ENCODE measurements at regions of chr12 and their contacts with region 1.

Region 1: DNA sequence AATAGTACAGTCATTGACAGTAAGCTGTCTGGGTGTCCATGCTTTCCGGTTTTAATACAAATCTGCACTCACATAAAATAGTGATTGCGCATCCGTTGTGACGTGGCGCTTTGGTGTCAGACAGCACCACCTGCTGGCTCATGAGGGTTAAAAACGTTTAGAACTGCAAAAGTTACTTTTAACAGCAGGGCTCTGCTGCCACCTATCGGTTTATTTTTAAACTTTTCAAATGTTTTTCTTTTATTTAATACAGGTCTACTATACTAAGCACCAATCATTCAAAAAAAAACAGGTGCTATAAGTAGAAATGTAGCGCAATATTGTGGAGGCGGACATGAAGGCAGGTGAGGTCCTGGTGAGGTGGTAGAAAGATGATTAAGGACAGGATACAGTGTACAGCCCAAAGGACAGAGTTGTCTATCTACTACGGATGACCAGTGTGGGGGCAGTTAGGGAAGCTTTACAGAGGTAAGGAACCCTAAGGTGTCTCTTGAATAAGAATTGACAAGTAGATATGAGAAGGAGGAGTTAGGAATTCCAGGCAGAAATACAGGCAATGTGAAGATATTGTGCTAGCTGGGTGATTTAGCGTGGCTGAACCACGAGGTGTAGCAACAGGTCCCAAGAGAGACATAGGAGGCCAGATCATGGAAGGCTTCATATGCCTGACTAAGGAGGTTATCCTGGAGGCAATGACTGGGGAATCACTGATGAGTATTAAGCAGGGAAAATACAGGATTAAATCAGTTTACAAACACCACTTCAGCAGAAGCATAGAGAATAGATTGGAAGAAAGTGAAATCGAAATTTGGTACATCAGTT is 91.5 kb upstream of the PRB2 start:
- DNase-seq: peak; percentile 43
- ATAC-seq: peak; percentile 94
- H3K4me3 ChIP-seq: no peak overlapping the region
- H3K27ac ChIP-seq: no peak overlapping the region
- H3K4me1 ChIP-seq: no peaks in the 10 kb centered on the region
- H3K27me3 ChIP-seq: no peaks in the 10 kb centered on the region
- CTCF ChIP-seq: peak; percentile 88 to 99 (median 98); a peak in 5 of 6 replicates
- EP300 ChIP-seq: no peak
- POLR2A ChIP-seq: no peak
- RAD21 ChIP-seq: peak; percentile 96

Region 2: DNA sequence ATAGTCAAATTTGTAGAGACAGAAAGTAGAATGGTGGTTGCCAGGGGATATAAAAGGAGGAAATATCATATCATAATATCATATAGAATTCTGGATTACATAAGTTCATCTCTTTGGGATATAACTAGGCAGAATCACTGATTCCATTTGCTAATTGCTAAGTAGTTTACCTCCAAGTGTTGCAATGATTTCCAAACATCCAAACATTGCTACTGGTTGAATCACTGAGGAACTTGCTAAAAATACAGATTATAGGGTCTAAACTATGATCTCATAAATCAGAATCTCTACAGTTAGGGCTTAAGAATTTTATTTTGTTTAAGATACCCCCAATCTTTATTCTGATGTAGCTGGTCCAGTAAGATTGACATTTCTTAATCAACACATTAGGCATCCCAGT is 284.0 kb before region 1 on chr12:
- CTCF ChIA-PET with region 1: interaction called, 5 read pairs
- POLR2A ChIA-PET with region 1: interaction called, 4 read pairs
- RAD21 ChIA-PET with region 1: interaction called, 5 read pairs
- SMC1A ChIA-PET with region 1: no interaction called
- in situ Hi-C with region 1: no loop called
- intact Hi-C with region 1: loop called (anchors 1 kb)
- DNase-seq: no peak
- ATAC-seq: no peak
- H3K4me3 ChIP-seq: no peak overlapping the region
- H3K27ac ChIP-seq: no peak overlapping the region
- H3K4me1 ChIP-seq: no peaks in the 10 kb centered on the region
- H3K27me3 ChIP-seq: no peaks in the 10 kb centered on the region; a peak in 1 of 4 replicates
- CTCF ChIP-seq: no peak
- EP300 ChIP-seq: no peak
- POLR2A ChIP-seq: no peak
- RAD21 ChIP-seq: no peak

Region 3: DNA sequence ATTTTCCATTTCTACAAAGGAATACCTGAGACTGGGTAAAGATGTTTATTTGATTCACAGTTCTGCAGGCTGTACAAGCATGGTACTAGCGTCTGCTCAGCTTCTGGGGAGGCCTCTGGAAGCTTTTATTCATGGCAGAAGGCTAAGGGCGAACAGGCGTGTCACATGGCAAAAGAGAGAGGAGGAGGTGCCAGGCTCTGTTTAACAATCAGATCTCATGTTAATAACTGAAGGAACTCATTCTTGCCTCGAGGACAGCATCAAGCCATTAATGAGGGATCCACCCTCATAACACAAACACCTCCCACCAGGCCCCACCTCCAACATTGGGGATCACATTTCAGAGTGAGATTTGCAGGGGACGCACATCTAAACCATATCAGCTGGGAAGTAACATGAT is 253.3 kb before region 1 on chr12:
- CTCF ChIA-PET with region 1: interaction called, 133 read pairs
- POLR2A ChIA-PET with region 1: no interaction called
- RAD21 ChIA-PET with region 1: interaction called, 45 read pairs
- SMC1A ChIA-PET with region 1: interaction called, 42 read pairs
- in situ Hi-C with region 1: loop called (anchors 5 kb)
- intact Hi-C with region 1: loop called (anchors 1 kb)
- DNase-seq: no peak
- ATAC-seq: no peak
- H3K4me3 ChIP-seq: no peak overlapping the region
- H3K27ac ChIP-seq: no peak overlapping the region
- H3K4me1 ChIP-seq: no peaks in the 10 kb centered on the region
- H3K27me3 ChIP-seq: no peaks in the 10 kb centered on the region
- CTCF ChIP-seq: no peak
- EP300 ChIP-seq: no peak
- POLR2A ChIP-seq: no peak
- RAD21 ChIP-seq: no peak

Region 4: GRCh38 chr12:11397366-11397765 is 89.5 kb before region 1 on chr12:
- CTCF ChIA-PET with region 1: no interaction called
- POLR2A ChIA-PET with region 1: no interaction called
- RAD21 ChIA-PET with region 1: no interaction called
- SMC1A ChIA-PET with region 1: no interaction called
- in situ Hi-C with region 1: no loop called
- intact Hi-C with region 1: no loop called
- DNase-seq: no peak
- ATAC-seq: no peak
- H3K4me3 ChIP-seq: no peak overlapping the region
- H3K27ac ChIP-seq: no peak overlapping the region
- H3K4me1 ChIP-seq: no peaks in the 10 kb centered on the region
- H3K27me3 ChIP-seq: peaks cover 0 to 2% of the 10 kb centered on the region in 2 experiments; a peak in 2 of 4 replicates
- CTCF ChIP-seq: no peak
- EP300 ChIP-seq: no peak
- POLR2A ChIP-seq: no peak
- RAD21 ChIP-seq: no peak

Region 5: GRCh38 chr12:11513288-11513687 is 26.5 kb after region 1 on chr12:
- CTCF ChIA-PET with region 1: interaction called, 19 read pairs
- POLR2A ChIA-PET with region 1: no interaction called
- RAD21 ChIA-PET with region 1: no interaction called
- SMC1A ChIA-PET with region 1: no interaction called
- in situ Hi-C with region 1: no loop called
- intact Hi-C with region 1: no loop called
- DNase-seq: no peak
- ATAC-seq: no peak
- H3K4me3 ChIP-seq: no peak overlapping the region
- H3K27ac ChIP-seq: no peak overlapping the region
- H3K4me1 ChIP-seq: no peaks in the 10 kb centered on the region
- H3K27me3 ChIP-seq: no peaks in the 10 kb centered on the region
- CTCF ChIP-seq: 0 out of 6 replicates have a peak, but pooled peaks of 1 of the 3 experiments have one; percentile 11
- EP300 ChIP-seq: no peak
- POLR2A ChIP-seq: no peak
- RAD21 ChIP-seq: 0 out of 2 replicates have a peak, but pooled peaks have one; percentile 22

Measured in GM12878 (cell line).